ENCODE measurements at regions of chr9 and their contacts with region 1.

Region 1: GRCh38 chr9:108933718-108934322 is at the start of gene ELP1:
- DNase-seq: peak; percentile 90
- H3K4me3 Mint-ChIP-seq: peak within 1 kb of the TSS; percentile 95
- H3K27ac Mint-ChIP-seq: peak within 1 kb of the TSS; percentile 95
- H3K4me1 Mint-ChIP-seq: peaks cover 23% of the 10 kb centered on the region
- H3K27me3 Mint-ChIP-seq: no peaks in the 10 kb centered on the region
- total RNA-seq, gene ELP1: 31.6 and 35.2 TPM in 2 replicates

Region 2: DNA sequence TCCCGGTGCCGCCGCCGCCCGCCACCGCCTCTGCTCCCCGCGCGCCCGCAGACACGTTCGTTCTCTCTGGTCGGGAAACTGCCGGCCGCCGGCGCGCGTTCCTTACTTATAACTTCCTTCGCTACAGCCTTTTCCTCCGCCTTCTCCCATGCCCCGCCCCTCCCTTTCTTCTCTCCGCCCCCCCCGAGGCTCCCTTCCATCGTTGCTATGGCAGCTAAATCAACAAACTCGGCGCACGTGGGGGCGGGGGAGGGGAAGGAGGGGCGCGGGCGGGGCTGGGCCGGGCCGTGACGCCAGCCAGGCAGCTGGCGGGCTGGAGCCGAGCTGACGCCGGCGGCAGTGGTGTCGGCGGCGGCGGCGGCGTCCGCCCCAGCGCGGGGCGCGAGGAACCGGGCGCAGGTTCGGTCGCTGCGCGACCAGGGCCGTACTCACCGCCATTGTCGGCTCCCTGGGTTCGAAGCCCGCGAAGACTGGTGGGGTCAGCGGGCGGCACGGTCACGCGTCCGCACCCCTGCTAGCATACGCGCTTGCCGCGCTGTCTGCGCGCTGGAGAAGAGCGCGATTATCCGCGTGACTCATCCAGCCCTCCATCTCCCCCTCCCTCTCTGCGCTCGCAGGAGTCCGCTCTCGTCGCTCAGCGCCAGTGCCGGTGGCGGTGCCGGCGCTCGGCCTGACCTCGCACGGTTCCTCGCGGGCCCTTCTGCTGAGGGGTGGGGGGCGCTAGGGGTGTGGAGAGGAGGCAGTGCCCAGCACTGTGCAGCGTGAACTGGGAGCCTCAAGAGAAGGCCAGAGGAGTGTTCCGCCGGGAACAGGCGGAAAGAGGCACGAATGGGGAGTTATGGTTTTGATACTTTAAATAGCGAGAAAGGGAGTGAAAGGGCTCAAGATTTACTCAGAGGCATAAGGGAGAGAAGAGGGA is 1443.9 kb before region 1 on chr9 and contains the start of gene KLF4:
- intact Hi-C with region 1: loop called (anchors 5 kb)
- DNase-seq: peak; percentile 54
- H3K4me3 Mint-ChIP-seq: peak within 1 kb of the TSS; percentile 70
- H3K27ac Mint-ChIP-seq: peak within 1 kb of the TSS; percentile 58
- H3K4me1 Mint-ChIP-seq: peaks cover 5% of the 10 kb centered on the region
- H3K27me3 Mint-ChIP-seq: peaks cover 67% of the 10 kb centered on the region
- total RNA-seq, gene KLF4: 2.3 and 3.3 TPM in 2 replicates

Region 3: GRCh38 chr9:108885643-108886348 is 48.0 kb before region 1 on chr9:
- intact Hi-C with region 1: loop called (anchors 2 kb)
- DNase-seq: no peak
- H3K4me3 Mint-ChIP-seq: peak overlapping the region; percentile 8
- H3K27ac Mint-ChIP-seq: peak overlapping the region; percentile 80
- H3K4me1 Mint-ChIP-seq: peaks cover 16% of the 10 kb centered on the region
- H3K27me3 Mint-ChIP-seq: no peaks in the 10 kb centered on the region